Sigmoid colon (tissue), 7 donors: ENCODE measurements at regions of chr2 and their contacts with region 1.

Region 1: DNA sequence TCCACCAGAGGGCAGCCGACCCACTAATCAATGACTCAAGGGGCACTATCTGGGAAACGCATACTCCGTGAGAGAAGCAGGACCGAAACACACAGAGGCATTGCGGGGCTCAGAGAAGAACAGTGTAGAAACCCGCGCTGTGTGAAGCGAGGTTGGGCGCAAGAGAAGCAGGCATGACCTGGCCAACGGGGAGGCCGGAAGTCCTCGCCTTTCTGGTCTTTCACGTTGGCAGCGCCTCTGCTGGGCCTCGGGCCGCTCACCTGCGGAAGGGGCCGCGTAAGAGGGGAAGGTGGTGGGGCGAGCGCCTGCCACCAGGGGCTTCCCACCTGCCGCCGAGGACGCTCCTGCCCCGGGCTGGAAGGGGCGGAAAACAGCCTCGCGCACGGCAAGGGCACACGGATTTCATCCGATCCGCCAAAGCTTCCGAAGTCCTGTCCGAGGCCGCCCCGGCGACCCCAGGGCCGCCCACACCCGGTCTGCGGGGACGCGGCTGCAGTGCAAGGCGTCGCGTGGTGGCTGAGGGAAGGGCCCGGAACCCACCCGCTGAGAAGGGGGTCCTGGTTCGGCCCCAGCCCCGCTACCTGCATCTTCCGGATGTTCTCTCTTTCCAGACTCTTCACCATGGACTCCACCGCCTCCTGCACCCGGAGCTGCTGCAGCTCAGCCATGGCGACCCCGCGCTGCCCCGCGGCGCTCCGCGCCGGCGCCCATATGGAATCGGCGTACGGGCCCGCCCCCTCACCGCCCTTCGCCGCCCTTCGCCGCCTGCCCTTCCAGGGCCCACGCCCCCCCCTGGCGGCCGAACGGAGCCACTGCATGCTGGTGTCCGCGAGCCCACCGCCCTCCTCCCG is at the start of gene FAM136A:
- DNase-seq: peak; percentile 91
- H3K4me3 ChIP-seq: peak within 1 kb of the TSS; percentile 68 to 98 (median 90)
- H3K27ac ChIP-seq: peak within 1 kb of the TSS; percentile 81 to 90 (median 83)
- H3K4me1 ChIP-seq: peaks cover 0 to 22% (median 14%) of the 10 kb centered on the region in 4 donors
- H3K27me3 ChIP-seq: no peaks in the 10 kb centered on the region
- CTCF ChIP-seq: peak; percentile 82 to 99 (median 94)
- EP300 ChIP-seq: no peak
- POLR2A ChIP-seq: no peak
- total RNA-seq, gene FAM136A: 20.0 to 25.3 (median 24.1) TPM

Region 2: DNA sequence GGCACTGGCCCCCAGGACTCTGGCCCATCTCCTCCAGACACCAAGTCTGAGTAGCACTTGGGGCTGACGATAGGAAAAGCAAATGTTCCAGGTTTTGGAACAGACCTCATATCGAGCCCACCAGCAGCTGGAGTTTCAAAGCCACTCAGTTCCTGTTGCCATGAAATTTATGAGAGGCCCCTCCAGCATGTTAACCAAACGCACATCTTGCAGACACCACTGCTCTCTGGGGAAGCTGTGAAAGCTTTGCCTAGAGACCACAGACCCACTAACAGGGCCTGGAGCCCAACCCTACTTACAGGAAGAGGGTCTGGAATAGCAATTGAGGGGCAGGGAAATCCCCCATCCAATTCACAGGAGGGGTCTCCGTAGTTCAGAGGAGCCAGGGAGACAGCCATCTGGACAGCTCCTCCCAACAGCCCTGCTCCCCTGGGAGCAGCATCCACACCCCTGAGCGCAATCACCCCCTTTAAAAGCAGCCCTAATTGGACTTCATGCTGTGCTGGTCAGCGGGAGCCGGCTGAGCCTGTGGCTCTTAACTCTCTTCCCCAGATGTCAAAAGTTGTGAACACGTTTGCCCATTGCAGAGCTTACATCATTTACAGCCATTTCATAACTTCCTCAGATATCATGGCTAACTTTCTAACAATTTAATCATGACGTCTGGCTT is 170.8 kb after region 1 on chr2:
- intact Hi-C with region 1: no loop called
- DNase-seq: no peak
- H3K4me3 ChIP-seq: no peak overlapping the region
- H3K27ac ChIP-seq: no peak overlapping the region
- H3K4me1 ChIP-seq: no peaks in the 10 kb centered on the region
- H3K27me3 ChIP-seq: no peaks in the 10 kb centered on the region
- CTCF ChIP-seq: no peak
- EP300 ChIP-seq: no peak
- POLR2A ChIP-seq: no peak

Region 3: DNA sequence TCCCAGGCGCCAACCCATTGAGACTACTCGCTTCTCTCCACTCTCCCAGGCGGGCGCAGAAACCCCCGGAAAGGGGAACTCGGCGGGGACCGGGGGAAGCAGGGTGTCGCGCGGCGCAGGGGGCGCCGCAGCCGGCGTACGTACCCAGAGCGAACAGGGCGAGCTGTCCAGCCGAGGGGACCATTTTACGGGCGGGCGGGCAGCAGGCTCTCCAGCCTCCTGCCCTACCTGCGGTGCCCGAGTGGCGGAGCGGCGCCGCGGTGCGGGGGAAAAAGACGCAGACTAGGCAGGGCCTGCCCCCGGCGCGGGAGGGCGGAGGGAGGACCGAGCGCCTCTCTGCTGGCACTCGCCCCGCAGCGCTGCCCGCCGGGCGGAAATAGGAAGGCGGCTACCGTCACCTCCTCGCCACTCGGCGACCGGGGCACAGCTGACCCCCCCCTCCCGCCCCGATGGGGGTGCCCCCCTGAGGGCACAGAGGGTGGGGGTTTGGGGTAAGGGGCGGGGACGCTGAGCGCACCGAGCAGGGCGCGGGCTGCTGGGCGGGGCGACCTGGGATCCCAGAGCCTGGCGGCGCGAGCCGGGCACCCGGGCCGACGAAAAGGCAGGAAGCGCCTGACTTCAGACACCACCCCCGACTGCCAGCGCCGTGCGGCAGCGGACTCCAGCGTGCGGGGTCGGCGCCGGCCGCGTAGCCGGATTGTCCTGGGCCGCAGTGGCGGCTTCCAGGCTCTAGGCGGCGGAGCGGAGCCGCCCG is 252.2 kb after region 1 on chr2 and contains the start of gene TGFA:
- intact Hi-C with region 1: loop called (anchors 5 kb)
- DNase-seq: peak; percentile 71
- H3K4me3 ChIP-seq: peak within 1 kb of the TSS; percentile 59 to 85 (median 76)
- H3K27ac ChIP-seq: peak within 1 kb of the TSS in 3 of 4 donors; percentile 52 to 62 (median 60)
- H3K4me1 ChIP-seq: peaks cover 0 to 21% (median 16%) of the 10 kb centered on the region in 4 donors
- H3K27me3 ChIP-seq: peaks cover 9 to 63% (median 19%) of the 10 kb centered on the region in 3 donors
- CTCF ChIP-seq: peak in 3 of 4 experiments; percentile 51 to 77 (median 61)
- EP300 ChIP-seq: no peak
- POLR2A ChIP-seq: no peak
- total RNA-seq, gene TGFA: 0.33 to 3.2 (median 1.1) TPM in 3 of 4 donors, not detected in the other